Aorta (tissue), 5 donors: ENCODE measurements at regions of chr5 and their contacts with region 1.

Region 1: DNA sequence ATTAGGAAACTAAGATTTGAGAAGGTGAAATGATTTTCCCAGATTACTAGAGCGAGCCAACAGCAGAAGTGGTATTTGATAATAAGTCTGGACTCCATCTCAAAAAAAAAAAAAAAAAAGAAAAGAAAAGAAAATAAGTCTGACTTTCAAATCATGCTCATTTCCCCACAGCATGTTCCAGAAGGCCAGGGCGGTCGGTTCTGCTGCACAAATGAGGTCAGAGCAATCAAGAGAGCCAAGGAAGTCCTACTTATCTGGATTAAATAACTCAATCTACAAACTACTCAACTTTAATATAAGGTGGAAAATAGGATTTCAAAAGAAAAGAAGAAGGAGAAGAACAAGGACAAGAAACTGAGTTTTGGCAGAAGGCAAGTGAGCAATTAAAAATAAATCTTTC is 130.4 kb upstream of the RASA1 start:
- DNase-seq: peak in 1 of 2 donors; percentile 78
- ATAC-seq: peak; percentile 86
- H3K4me3 ChIP-seq: no peak overlapping the region
- H3K27ac ChIP-seq: peak overlapping the region in 1 of 2 donors; percentile 57
- H3K4me1 ChIP-seq: peaks cover 5 to 8% of the 10 kb centered on the region in 2 donors
- H3K27me3 ChIP-seq: no peaks in the 10 kb centered on the region

Region 2: DNA sequence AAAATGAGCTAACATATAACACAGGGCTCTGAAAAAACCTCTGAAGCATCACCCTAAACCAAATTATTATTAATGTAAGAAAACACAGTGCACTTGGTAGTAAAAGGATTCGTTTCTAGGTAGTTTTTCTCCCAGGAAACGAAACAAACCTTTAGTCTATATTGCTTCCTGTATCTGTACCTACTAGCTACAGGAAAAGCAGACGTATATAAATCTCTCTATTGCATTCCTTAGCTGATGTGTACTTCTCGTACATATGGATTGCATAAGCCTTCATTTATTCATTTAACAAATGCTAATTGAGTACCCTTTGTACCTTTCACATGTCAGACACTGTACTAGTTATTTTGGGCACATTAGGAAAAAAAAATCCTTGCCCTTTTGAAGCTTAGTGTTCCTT is 45.4 kb after region 1 on chr5:
- intact Hi-C with region 1: no loop called
- DNase-seq: no peak
- ATAC-seq: no peak
- H3K4me3 ChIP-seq: no peak overlapping the region
- H3K27ac ChIP-seq: no peak overlapping the region
- H3K4me1 ChIP-seq: no peaks in the 10 kb centered on the region
- H3K27me3 ChIP-seq: no peaks in the 10 kb centered on the region

Region 3: DNA sequence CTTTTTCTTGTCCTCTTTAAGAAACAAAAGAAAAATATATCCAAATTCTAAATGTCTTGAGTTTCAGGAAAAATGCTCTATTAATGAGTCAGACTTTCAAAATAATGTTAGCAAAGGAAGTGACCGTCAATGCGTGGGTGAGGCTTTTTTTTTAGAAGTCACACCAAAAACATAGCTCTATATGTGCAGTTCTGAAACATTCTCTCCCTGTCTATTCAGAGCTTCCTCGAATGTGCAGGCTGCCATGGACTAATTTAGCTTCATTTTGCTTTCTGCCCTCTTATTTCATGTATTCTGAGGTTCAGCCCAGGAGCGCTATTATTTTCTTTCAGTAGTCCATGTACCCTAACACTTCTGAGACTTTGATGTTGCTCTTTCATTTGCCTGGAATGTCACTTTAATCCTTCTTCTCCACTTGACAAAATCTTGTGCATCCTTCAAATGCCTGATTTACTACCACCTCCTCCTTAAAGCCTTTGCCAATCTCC is 57.9 kb after region 1 on chr5:
- intact Hi-C with region 1: loop called in 1 of 2 experiments (anchors 5 kb)
- DNase-seq: no peak
- ATAC-seq: no peak
- H3K4me3 ChIP-seq: no peak overlapping the region
- H3K27ac ChIP-seq: peak overlapping the region; percentile 71 to 91
- H3K4me1 ChIP-seq: peaks cover 0 to 6% of the 10 kb centered on the region in 2 donors
- H3K27me3 ChIP-seq: no peaks in the 10 kb centered on the region

Region 4: GRCh38 chr5:87231037-87231819 is 93.9 kb after region 1 on chr5:
- intact Hi-C with region 1: no loop called
- DNase-seq: no peak
- ATAC-seq: no peak
- H3K4me3 ChIP-seq: no peak overlapping the region
- H3K27ac ChIP-seq: no peak overlapping the region
- H3K4me1 ChIP-seq: no peaks in the 10 kb centered on the region
- H3K27me3 ChIP-seq: no peaks in the 10 kb centered on the region

Region 5: GRCh38 chr5:87393331-87393730 is 256.0 kb after region 1 on chr5:
- intact Hi-C with region 1: loop called in 1 of 2 experiments (anchors 10 kb)
- DNase-seq: no peak
- ATAC-seq: no peak
- H3K4me3 ChIP-seq: no peak overlapping the region
- H3K27ac ChIP-seq: peak overlapping the region; percentile 57 to 71
- H3K4me1 ChIP-seq: peaks cover 0 to 11% of the 10 kb centered on the region in 2 donors
- H3K27me3 ChIP-seq: no peaks in the 10 kb centered on the region

Region 6: GRCh38 chr5:87605663-87606062 is 468.4 kb after region 1 on chr5:
- intact Hi-C with region 1: no loop called
- DNase-seq: no peak
- ATAC-seq: no peak
- H3K4me3 ChIP-seq: no peak overlapping the region
- H3K27ac ChIP-seq: no peak overlapping the region
- H3K4me1 ChIP-seq: no peaks in the 10 kb centered on the region
- H3K27me3 ChIP-seq: no peaks in the 10 kb centered on the region